B cell (primary cell): ENCODE measurements at regions of chr12 and their contacts with region 1.

Region 1: GRCh38 chr12:76790564-76791552 is 26.9 kb downstream of the ZDHHC17 start:
- DNase-seq: peak; percentile 56
- ATAC-seq: peak; percentile 33
- H3K4me3 ChIP-seq: no peak overlapping the region
- H3K4me3 Mint-ChIP-seq: no peak overlapping the region
- H3K27ac ChIP-seq: peak overlapping the region in 1 of 2 donors; percentile 52
- H3K27ac Mint-ChIP-seq: peak overlapping the region; percentile 12
- H3K4me1 ChIP-seq: peaks cover 7 to 12% of the 10 kb centered on the region in 2 donors
- H3K4me1 Mint-ChIP-seq: peaks cover 27% of the 10 kb centered on the region
- H3K27me3 ChIP-seq: no peaks in the 10 kb centered on the region
- H3K27me3 Mint-ChIP-seq: no peaks in the 10 kb centered on the region
- CTCF ChIP-seq: peak; percentile 92

Region 2: GRCh38 chr12:76621582-76622024 is 169.3 kb before region 1 on chr12:
- CTCF ChIA-PET with region 1: interaction called, 166 read pairs
- POLR2A ChIA-PET with region 1: no interaction called
- intact Hi-C with region 1: loop called (anchors 1 kb)
- DNase-seq: peak; percentile 75
- ATAC-seq: peak; percentile 87
- H3K4me3 ChIP-seq: no peak overlapping the region
- H3K4me3 Mint-ChIP-seq: no peak overlapping the region
- H3K27ac ChIP-seq: no peak overlapping the region
- H3K27ac Mint-ChIP-seq: no peak overlapping the region
- H3K4me1 ChIP-seq: peaks cover 0 to 4% of the 10 kb centered on the region in 2 donors
- H3K4me1 Mint-ChIP-seq: peaks cover 4% of the 10 kb centered on the region
- H3K27me3 ChIP-seq: no peaks in the 10 kb centered on the region
- H3K27me3 Mint-ChIP-seq: no peaks in the 10 kb centered on the region
- CTCF ChIP-seq: peak; percentile 99

Region 3: DNA sequence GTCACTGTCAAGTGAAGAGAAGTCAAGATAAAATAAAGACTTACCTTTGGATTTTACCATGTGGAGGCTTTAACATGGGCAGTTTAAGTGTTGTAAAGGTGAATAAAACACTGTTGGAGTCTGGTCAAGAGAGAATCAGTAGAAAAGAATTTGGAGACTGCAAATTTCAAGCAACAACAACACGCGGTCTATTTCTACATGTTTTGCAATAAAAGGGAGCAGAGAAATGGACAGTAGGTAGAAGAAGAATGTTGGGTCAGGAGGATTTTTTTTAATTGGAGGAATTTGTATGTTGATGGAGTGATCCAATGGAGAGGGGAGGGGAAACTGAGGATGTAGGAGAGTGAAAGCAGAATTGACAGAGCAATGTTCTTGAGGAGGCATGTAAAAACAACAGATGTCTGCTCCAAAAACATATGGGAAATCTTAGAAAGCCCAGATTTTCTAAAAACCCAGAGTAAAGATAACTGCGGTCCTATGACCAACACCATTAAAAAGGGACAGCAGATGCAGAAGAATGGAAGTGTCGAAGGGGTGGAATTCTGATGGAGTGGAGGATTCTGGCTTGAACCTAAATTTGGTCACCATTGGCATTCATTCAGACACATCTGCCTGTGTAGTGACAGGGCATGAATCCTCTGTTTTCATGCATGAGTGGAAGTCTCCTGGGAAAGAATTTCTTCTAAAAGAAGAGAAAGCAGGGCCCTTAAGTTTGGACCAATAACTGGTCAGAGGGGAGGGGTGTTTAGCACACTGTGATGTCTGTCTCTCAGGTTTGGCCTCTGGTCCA is 163.3 kb before region 1 on chr12:
- CTCF ChIA-PET with region 1: interaction called, 166 read pairs
- POLR2A ChIA-PET with region 1: no interaction called
- intact Hi-C with region 1: no loop called
- DNase-seq: no peak
- ATAC-seq: no peak
- H3K4me3 ChIP-seq: no peak overlapping the region
- H3K4me3 Mint-ChIP-seq: no peak overlapping the region
- H3K27ac ChIP-seq: no peak overlapping the region
- H3K27ac Mint-ChIP-seq: no peak overlapping the region
- H3K4me1 ChIP-seq: no peaks in the 10 kb centered on the region
- H3K4me1 Mint-ChIP-seq: no peaks in the 10 kb centered on the region
- H3K27me3 ChIP-seq: no peaks in the 10 kb centered on the region
- H3K27me3 Mint-ChIP-seq: no peaks in the 10 kb centered on the region
- CTCF ChIP-seq: no peak

Region 4: DNA sequence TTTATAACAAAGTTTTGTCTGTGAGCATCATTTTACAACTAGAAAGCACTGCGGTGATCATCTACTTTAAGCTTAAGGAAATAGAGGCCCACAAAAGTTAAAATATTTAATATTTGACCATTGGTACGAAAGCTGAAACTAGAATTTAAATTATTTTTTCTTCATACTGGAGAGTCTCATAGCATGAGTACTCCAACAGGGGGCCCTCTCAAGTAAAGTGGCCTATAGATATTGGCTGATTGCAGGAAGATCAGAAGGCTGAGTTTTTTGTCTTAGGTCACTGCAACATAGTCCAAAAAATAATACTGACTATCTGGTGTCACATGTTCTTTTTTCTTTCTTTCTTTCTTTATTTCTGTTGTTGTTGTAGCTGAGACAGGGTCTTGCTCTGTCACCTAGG is 102.2 kb before region 1 on chr12:
- CTCF ChIA-PET with region 1: interaction called, 11 read pairs
- POLR2A ChIA-PET with region 1: no interaction called
- intact Hi-C with region 1: loop called (anchors 1 kb)
- DNase-seq: peak; percentile 10
- ATAC-seq: no peak
- H3K4me3 ChIP-seq: no peak overlapping the region
- H3K4me3 Mint-ChIP-seq: no peak overlapping the region
- H3K27ac ChIP-seq: no peak overlapping the region
- H3K27ac Mint-ChIP-seq: no peak overlapping the region
- H3K4me1 ChIP-seq: no peaks in the 10 kb centered on the region
- H3K4me1 Mint-ChIP-seq: no peaks in the 10 kb centered on the region
- H3K27me3 ChIP-seq: no peaks in the 10 kb centered on the region
- H3K27me3 Mint-ChIP-seq: peaks cover 8% of the 10 kb centered on the region
- CTCF ChIP-seq: no peak

Region 5: GRCh38 chr12:76777765-76778216 is 13.1 kb before region 1 on chr12:
- CTCF ChIA-PET with region 1: interaction called, 24 read pairs
- POLR2A ChIA-PET with region 1: no interaction called
- intact Hi-C with region 1: loop called (anchors 2 kb)
- DNase-seq: peak; percentile 89
- ATAC-seq: peak; percentile 97
- H3K4me3 ChIP-seq: no peak overlapping the region
- H3K4me3 Mint-ChIP-seq: peak overlapping the region; percentile 2
- H3K27ac ChIP-seq: peak overlapping the region; percentile 25 to 66
- H3K27ac Mint-ChIP-seq: peak overlapping the region; percentile 33
- H3K4me1 ChIP-seq: peaks cover 13 to 15% of the 10 kb centered on the region in 2 donors
- H3K4me1 Mint-ChIP-seq: peaks cover 53% of the 10 kb centered on the region
- H3K27me3 ChIP-seq: no peaks in the 10 kb centered on the region
- H3K27me3 Mint-ChIP-seq: no peaks in the 10 kb centered on the region
- CTCF ChIP-seq: no peak

Region 6: GRCh38 chr12:76804435-76804976 is 13.6 kb after region 1 on chr12:
- CTCF ChIA-PET with region 1: interaction called, 11 read pairs
- POLR2A ChIA-PET with region 1: no interaction called
- intact Hi-C with region 1: no loop called
- DNase-seq: no peak
- ATAC-seq: no peak
- H3K4me3 ChIP-seq: no peak overlapping the region
- H3K4me3 Mint-ChIP-seq: no peak overlapping the region
- H3K27ac ChIP-seq: no peak overlapping the region
- H3K27ac Mint-ChIP-seq: no peak overlapping the region
- H3K4me1 ChIP-seq: no peaks in the 10 kb centered on the region
- H3K4me1 Mint-ChIP-seq: no peaks in the 10 kb centered on the region
- H3K27me3 ChIP-seq: no peaks in the 10 kb centered on the region
- H3K27me3 Mint-ChIP-seq: no peaks in the 10 kb centered on the region
- CTCF ChIP-seq: no peak

Region 7: DNA sequence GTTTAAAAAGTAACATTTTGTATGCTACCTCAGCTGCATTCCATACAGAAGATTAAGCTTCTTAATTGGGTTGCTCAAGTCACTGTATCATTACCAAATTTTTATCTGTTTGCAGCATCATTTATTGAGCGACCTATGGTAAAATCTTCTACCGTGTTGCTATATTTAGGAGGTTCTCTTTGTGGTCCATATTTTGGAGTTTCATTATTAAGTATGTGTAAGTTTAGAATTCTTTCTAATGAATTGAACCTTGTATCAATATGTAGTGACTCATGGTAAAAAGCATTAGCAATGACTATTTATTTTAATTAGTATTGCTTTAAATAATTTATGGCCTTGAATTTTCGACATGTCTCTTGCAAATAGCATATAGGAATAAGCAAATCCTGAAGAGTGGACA is 45.8 kb after region 1 on chr12:
- CTCF ChIA-PET with region 1: no interaction called
- POLR2A ChIA-PET with region 1: no interaction called
- intact Hi-C with region 1: no loop called
- DNase-seq: no peak
- ATAC-seq: no peak
- H3K4me3 ChIP-seq: no peak overlapping the region
- H3K4me3 Mint-ChIP-seq: no peak overlapping the region
- H3K27ac ChIP-seq: no peak overlapping the region
- H3K27ac Mint-ChIP-seq: no peak overlapping the region
- H3K4me1 ChIP-seq: no peaks in the 10 kb centered on the region
- H3K4me1 Mint-ChIP-seq: no peaks in the 10 kb centered on the region
- H3K27me3 ChIP-seq: no peaks in the 10 kb centered on the region
- H3K27me3 Mint-ChIP-seq: no peaks in the 10 kb centered on the region
- CTCF ChIP-seq: no peak

Region 8: GRCh38 chr12:77010691-77011548 is 220.1 kb after region 1 on chr12:
- CTCF ChIA-PET with region 1: interaction called, 10 read pairs
- POLR2A ChIA-PET with region 1: no interaction called
- intact Hi-C with region 1: loop called (anchors 5 kb)
- DNase-seq: peak; percentile 57
- ATAC-seq: peak; percentile 69
- H3K4me3 ChIP-seq: no peak overlapping the region
- H3K4me3 Mint-ChIP-seq: no peak overlapping the region
- H3K27ac ChIP-seq: no peak overlapping the region
- H3K27ac Mint-ChIP-seq: no peak overlapping the region
- H3K4me1 ChIP-seq: no peaks in the 10 kb centered on the region
- H3K4me1 Mint-ChIP-seq: peaks cover 3% of the 10 kb centered on the region
- H3K27me3 ChIP-seq: peaks cover 0 to 3% (median 0%) of the 10 kb centered on the region in 4 experiments
- H3K27me3 Mint-ChIP-seq: peaks cover 16% of the 10 kb centered on the region
- CTCF ChIP-seq: peak; percentile 99